Panc1 (cell line): ENCODE measurements at regions of chr10 and their contacts with region 1.

Region 1: GRCh38 chr10:119199231-119199992 is 8.0 kb upstream of the GRK5 start:
- DNase-seq: peak; percentile 75
- ATAC-seq: peak; percentile 97
- H3K4me3 ChIP-seq: no peak overlapping the region
- H3K27ac ChIP-seq: no peak overlapping the region
- H3K4me1 ChIP-seq: peaks cover 7% of the 10 kb centered on the region; the same call in 1 of the 2 replicates
- H3K27me3 ChIP-seq: no peaks in the 10 kb centered on the region
- CTCF ChIP-seq: peak; percentile 98

Region 2: GRCh38 chr10:119270762-119271366 is 71.5 kb after region 1 on chr10:
- CTCF ChIA-PET with region 1: interaction called, 10 read pairs
- POLR2A ChIA-PET with region 1: no interaction called
- in situ Hi-C with region 1: no loop called
- intact Hi-C with region 1: no loop called
- DNase-seq: no peak
- ATAC-seq: peak; percentile 88
- H3K4me3 ChIP-seq: peak overlapping the region; percentile 22 to 47
- H3K27ac ChIP-seq: peak overlapping the region; percentile 93
- H3K4me1 ChIP-seq: peaks cover 73% of the 10 kb centered on the region
- H3K27me3 ChIP-seq: no peaks in the 10 kb centered on the region
- CTCF ChIP-seq: no peak

Region 3: DNA sequence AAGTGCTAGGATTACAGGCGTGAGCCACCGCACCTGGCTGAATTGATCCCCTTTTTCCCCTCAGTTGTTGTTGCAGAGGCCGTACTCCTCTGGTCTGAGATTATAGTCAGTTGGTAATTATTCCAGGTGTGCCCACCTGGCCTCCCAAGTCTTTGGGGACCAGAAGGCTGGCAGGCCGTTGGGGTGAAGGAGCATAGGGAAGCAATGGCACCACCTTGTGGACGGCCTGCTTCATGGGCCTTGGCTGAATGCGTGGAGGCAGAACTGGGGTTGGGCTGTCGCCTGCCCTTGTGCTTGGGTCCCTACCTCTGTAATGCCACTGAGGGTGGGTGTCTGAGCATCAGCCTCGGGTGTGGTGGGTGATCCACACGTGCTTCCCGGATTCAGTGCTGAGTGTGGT is 217.4 kb after region 1 on chr10:
- CTCF ChIA-PET with region 1: interaction called, 11 read pairs
- POLR2A ChIA-PET with region 1: no interaction called
- in situ Hi-C with region 1: no loop called
- intact Hi-C with region 1: loop called (anchors 2 kb)
- DNase-seq: peak; percentile 32
- ATAC-seq: peak; percentile 86
- H3K4me3 ChIP-seq: no peak overlapping the region
- H3K27ac ChIP-seq: no peak overlapping the region
- H3K4me1 ChIP-seq: 0 out of 2 replicates have a peak, but pooled peaks cover 3% of the 10 kb centered on the region
- H3K27me3 ChIP-seq: no peaks in the 10 kb centered on the region
- CTCF ChIP-seq: peak; percentile 94

Region 4: DNA sequence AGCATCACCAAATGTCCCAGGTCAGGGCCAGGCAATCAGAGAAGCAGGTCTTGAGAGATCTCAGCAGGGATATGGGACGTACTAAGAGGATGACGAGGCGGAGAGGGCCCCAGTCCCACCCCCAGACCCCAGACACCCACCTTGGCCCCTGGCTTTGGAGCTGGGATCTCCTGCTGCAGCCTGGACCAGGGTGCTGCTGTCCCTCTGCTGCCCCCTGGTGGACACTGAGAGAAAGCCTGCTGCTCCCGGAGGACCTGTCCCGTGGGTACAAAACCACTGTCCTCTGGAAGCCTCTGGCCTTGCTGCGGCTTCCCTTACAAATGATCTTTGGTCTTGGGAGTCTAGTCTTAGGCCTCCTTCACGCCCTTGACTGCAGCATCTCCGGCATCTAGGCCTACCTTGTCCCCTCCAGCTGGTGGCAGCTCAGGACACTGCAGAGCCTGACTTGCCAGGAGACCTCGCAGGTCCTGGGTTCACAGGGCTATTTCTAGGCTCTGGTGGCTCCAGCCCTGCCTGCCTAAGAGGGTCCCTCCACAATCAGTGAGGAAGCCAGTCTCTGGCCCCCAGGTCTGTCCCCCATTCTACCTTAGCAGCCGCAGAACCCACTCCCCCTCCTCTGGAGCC is 246.0 kb after region 1 on chr10:
- CTCF ChIA-PET with region 1: interaction called, 31 read pairs
- POLR2A ChIA-PET with region 1: interaction called, 3 read pairs
- in situ Hi-C with region 1: no loop called
- intact Hi-C with region 1: loop called (anchors 1 kb)
- DNase-seq: peak; percentile 64
- ATAC-seq: peak; percentile 89
- H3K4me3 ChIP-seq: no peak overlapping the region
- H3K27ac ChIP-seq: no peak overlapping the region
- H3K4me1 ChIP-seq: peaks cover 7% of the 10 kb centered on the region
- H3K27me3 ChIP-seq: no peaks in the 10 kb centered on the region
- CTCF ChIP-seq: peak; percentile 99

Region 5: DNA sequence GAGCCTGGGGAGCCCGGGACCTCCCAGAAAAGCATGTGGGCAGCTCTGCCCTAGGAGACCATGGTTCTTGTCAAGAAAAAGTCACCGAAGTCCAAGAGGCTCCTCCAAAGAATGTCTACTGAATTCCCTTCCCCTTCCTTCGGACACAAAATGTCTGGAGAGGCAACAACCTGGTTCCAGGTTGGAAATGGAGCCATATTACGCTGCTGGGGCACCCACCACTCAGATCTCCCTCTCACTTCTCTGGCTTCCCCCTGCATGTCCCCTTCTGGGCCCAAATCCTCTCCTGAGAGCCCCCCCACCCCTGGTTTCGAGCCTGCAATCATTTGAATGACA is 290.5 kb after region 1 on chr10:
- CTCF ChIA-PET with region 1: interaction called, 34 read pairs
- POLR2A ChIA-PET with region 1: no interaction called
- in situ Hi-C with region 1: no loop called
- intact Hi-C with region 1: loop called (anchors 5 kb)
- DNase-seq: no peak
- ATAC-seq: peak; percentile 41
- H3K4me3 ChIP-seq: peak overlapping the region; percentile 38 to 57
- H3K27ac ChIP-seq: no peak overlapping the region
- H3K4me1 ChIP-seq: peaks cover 14% of the 10 kb centered on the region
- H3K27me3 ChIP-seq: no peaks in the 10 kb centered on the region
- CTCF ChIP-seq: no peak; the same call in 1 of the 2 replicates

Region 6: GRCh38 chr10:119538632-119539513 is 339.5 kb after region 1 on chr10:
- CTCF ChIA-PET with region 1: interaction called, 4 read pairs
- POLR2A ChIA-PET with region 1: interaction called, 5 read pairs
- in situ Hi-C with region 1: no loop called
- intact Hi-C with region 1: loop called (anchors 5 kb)
- DNase-seq: no peak
- ATAC-seq: no peak
- H3K4me3 ChIP-seq: no peak overlapping the region
- H3K27ac ChIP-seq: peak overlapping the region; percentile 67
- H3K4me1 ChIP-seq: peaks cover 59% of the 10 kb centered on the region
- H3K27me3 ChIP-seq: no peaks in the 10 kb centered on the region
- CTCF ChIP-seq: no peak; the same call in 1 of the 2 replicates